T-cell (primary cell): ENCODE measurements at regions of chr7 and their contacts with region 1.

Region 1: DNA sequence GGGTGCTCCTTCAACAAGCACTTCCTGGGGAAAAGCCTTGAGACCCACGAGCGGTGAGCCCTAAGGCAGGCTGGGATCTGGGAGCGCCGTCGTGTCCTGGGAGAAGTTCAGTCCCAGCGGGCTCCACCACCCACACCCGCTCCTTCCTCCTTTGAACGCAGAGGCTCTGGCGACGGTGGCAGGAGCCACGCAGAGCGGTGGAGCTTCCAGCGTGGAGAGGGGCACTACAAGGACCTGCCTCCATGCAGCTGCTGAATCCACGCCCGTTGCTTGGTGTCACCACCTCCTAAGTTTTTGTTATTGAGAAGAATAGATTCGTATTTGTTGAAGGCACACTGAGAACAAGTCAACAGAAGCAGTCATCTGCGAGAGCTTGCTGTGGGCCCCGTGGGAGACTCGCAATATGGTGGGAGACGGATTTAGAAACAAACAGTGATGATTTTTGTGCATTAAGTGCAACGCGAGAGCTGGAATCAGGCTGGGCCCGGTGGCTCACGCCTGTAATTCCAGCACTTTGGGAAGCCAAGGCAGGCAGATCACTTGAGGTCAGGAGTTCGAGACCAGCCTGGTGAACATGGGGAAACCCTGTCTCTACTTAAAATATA is 60.1 kb upstream of the SDK1 start:
- DNase-seq: no peak
- ATAC-seq: no peak
- H3K4me3 ChIP-seq: no peak overlapping the region
- H3K4me3 Mint-ChIP-seq: no peak overlapping the region
- H3K27ac ChIP-seq: no peak overlapping the region
- H3K27ac Mint-ChIP-seq: no peak overlapping the region
- H3K4me1 ChIP-seq: no peaks in the 10 kb centered on the region
- H3K4me1 Mint-ChIP-seq: no peaks in the 10 kb centered on the region
- H3K27me3 ChIP-seq: peaks cover 0 to 16% of the 10 kb centered on the region in 2 experiments
- H3K27me3 Mint-ChIP-seq: peaks cover 0 to 6% of the 10 kb centered on the region in 2 donors

Region 2: GRCh38 chr7:2978403-2978802 is 262.5 kb before region 1 on chr7:
- CTCF ChIA-PET with region 1: no interaction called
- POLR2A ChIA-PET with region 1: no interaction called
- DNase-seq: peak in 34 of 35 experiments; percentile 41 to 80 (median 58)
- ATAC-seq: peak; percentile 57 to 76 (median 61)
- H3K4me3 ChIP-seq: peak overlapping the region; percentile 39 to 67
- H3K4me3 Mint-ChIP-seq: peak overlapping the region; percentile 72 to 86 (median 79)
- H3K27ac ChIP-seq: peak overlapping the region; percentile 63
- H3K27ac Mint-ChIP-seq: peak overlapping the region; percentile 89 to 91
- H3K4me1 ChIP-seq: peaks cover 34 to 64% of the 10 kb centered on the region in 2 experiments
- H3K4me1 Mint-ChIP-seq: peaks cover 68 to 78% (median 72%) of the 10 kb centered on the region in 3 donors
- H3K27me3 ChIP-seq: no peaks in the 10 kb centered on the region
- H3K27me3 Mint-ChIP-seq: no peaks in the 10 kb centered on the region

Region 3: GRCh38 chr7:3210531-3210930 is 30.4 kb before region 1 on chr7:
- CTCF ChIA-PET with region 1: interaction called in 1 of 2 experiments, 11 read pairs
- POLR2A ChIA-PET with region 1: no interaction called
- DNase-seq: no peak
- ATAC-seq: no peak
- H3K4me3 ChIP-seq: no peak overlapping the region
- H3K4me3 Mint-ChIP-seq: no peak overlapping the region
- H3K27ac ChIP-seq: no peak overlapping the region
- H3K27ac Mint-ChIP-seq: no peak overlapping the region
- H3K4me1 ChIP-seq: no peaks in the 10 kb centered on the region
- H3K4me1 Mint-ChIP-seq: no peaks in the 10 kb centered on the region
- H3K27me3 ChIP-seq: peaks cover 0 to 3% of the 10 kb centered on the region in 2 experiments
- H3K27me3 Mint-ChIP-seq: peaks cover 0 to 3% of the 10 kb centered on the region in 2 donors